ENCODE measurements at regions of chr18 and their contacts with region 1.

Region 1: GRCh38 chr18:63016270-63016669 is 300.9 kb downstream of the PHLPP1 start:
- DNase-seq: peak; percentile 42 to 51 (median 49)
- ATAC-seq: peak; percentile 74
- H3K4me3 ChIP-seq: no peak overlapping the region
- H3K27ac ChIP-seq: no peak overlapping the region
- H3K4me1 ChIP-seq: no peaks in the 10 kb centered on the region
- H3K27me3 ChIP-seq: peaks cover 0 to 4% of the 10 kb centered on the region in 2 experiments; a peak in 2 of 5 replicates
- CTCF ChIP-seq: peak; percentile 58 to 77 (median 63)
- EP300 ChIP-seq: no peak
- POLR2A ChIP-seq: no peak
- RAD21 ChIP-seq: peak; percentile 63 to 70

Region 2: GRCh38 chr18:62763101-62763521 is 253.2 kb before region 1 on chr18:
- CTCF ChIA-PET with region 1: no interaction called
- POLR2A ChIA-PET with region 1: no interaction called
- in situ Hi-C with region 1: no loop called
- intact Hi-C with region 1: no loop called
- DNase-seq: no peak
- ATAC-seq: no peak
- H3K4me3 ChIP-seq: no peak overlapping the region
- H3K27ac ChIP-seq: no peak overlapping the region
- H3K4me1 ChIP-seq: no peaks in the 10 kb centered on the region
- H3K27me3 ChIP-seq: no peaks in the 10 kb centered on the region
- CTCF ChIP-seq: no peak
- EP300 ChIP-seq: no peak
- POLR2A ChIP-seq: no peak
- RAD21 ChIP-seq: no peak

Region 3: GRCh38 chr18:63180971-63181376 is 164.7 kb after region 1 on chr18:
- CTCF ChIA-PET with region 1: no interaction called
- POLR2A ChIA-PET with region 1: no interaction called
- in situ Hi-C with region 1: loop called (anchors 10 kb)
- intact Hi-C with region 1: no loop called
- DNase-seq: no peak
- ATAC-seq: no peak
- H3K4me3 ChIP-seq: no peak overlapping the region
- H3K27ac ChIP-seq: no peak overlapping the region
- H3K4me1 ChIP-seq: no peaks in the 10 kb centered on the region; a peak in 1 of 5 replicates
- H3K27me3 ChIP-seq: peaks cover 0 to 17% of the 10 kb centered on the region in 2 experiments; a peak in 2 of 5 replicates
- CTCF ChIP-seq: no peak
- EP300 ChIP-seq: no peak
- POLR2A ChIP-seq: no peak
- RAD21 ChIP-seq: no peak

Region 4: GRCh38 chr18:63320046-63320689 is 303.9 kb after region 1 on chr18:
- CTCF ChIA-PET with region 1: interaction called, 6 read pairs
- POLR2A ChIA-PET with region 1: no interaction called
- in situ Hi-C with region 1: loop called (anchors 5 kb)
- intact Hi-C with region 1: loop called (anchors 1 kb)
- DNase-seq: peak; percentile 56 to 77 (median 72)
- ATAC-seq: peak; percentile 88
- H3K4me3 ChIP-seq: peak overlapping the region; percentile 46
- H3K27ac ChIP-seq: peak overlapping the region; percentile 60; the same call in 1 of the 3 replicates
- H3K4me1 ChIP-seq: peaks cover 7 to 17% of the 10 kb centered on the region in 2 experiments; a peak in 4 of 5 replicates
- H3K27me3 ChIP-seq: peaks cover 0 to 5% of the 10 kb centered on the region in 2 experiments; a peak in 2 of 5 replicates
- CTCF ChIP-seq: no peak
- EP300 ChIP-seq: no peak
- POLR2A ChIP-seq: no peak
- RAD21 ChIP-seq: no peak

Region 5: DNA sequence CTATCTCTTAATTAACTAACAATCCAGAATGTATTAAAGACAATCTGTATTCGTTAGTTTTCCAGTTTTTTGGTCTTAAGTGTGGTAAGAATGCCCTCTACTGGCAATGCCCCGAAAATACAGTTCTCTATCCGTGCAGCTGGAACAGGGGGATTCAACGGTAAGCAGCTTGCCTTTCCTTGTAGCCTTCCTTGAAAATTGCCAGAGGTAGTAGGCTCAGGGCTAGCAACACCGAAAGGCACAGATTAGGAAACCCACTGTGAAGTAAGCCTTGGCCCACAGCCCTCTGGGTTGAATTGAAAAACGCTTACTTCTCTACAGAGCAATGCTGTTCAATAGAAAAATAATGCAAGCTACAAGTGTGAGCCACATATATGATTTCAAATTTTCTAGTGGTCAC is 423.1 kb after region 1 on chr18:
- CTCF ChIA-PET with region 1: interaction called, 4 read pairs
- POLR2A ChIA-PET with region 1: interaction called, 3 read pairs
- in situ Hi-C with region 1: loop called (anchors 10 kb)
- intact Hi-C with region 1: loop called (anchors 1 kb)
- DNase-seq: peak; percentile 43 to 52 (median 46)
- ATAC-seq: peak; percentile 81
- H3K4me3 ChIP-seq: no peak overlapping the region
- H3K27ac ChIP-seq: no peak overlapping the region
- H3K4me1 ChIP-seq: no peaks in the 10 kb centered on the region
- H3K27me3 ChIP-seq: peaks cover 0 to 4% of the 10 kb centered on the region in 2 experiments; a peak in 1 of 5 replicates
- CTCF ChIP-seq: peak; percentile 50 to 77 (median 66)
- EP300 ChIP-seq: no peak
- POLR2A ChIP-seq: no peak
- RAD21 ChIP-seq: peak; percentile 44 to 72

Region 6: GRCh38 chr18:63848159-63848558 is 831.9 kb after region 1 on chr18:
- CTCF ChIA-PET with region 1: interaction called, 4 read pairs
- POLR2A ChIA-PET with region 1: no interaction called
- in situ Hi-C with region 1: loop called (anchors 25 kb)
- intact Hi-C with region 1: no loop called
- DNase-seq: peak in 3 of 4 experiments; percentile 5 to 23 (median 6)
- ATAC-seq: no peak
- H3K4me3 ChIP-seq: no peak overlapping the region
- H3K27ac ChIP-seq: no peak overlapping the region
- H3K4me1 ChIP-seq: no peaks in the 10 kb centered on the region
- H3K27me3 ChIP-seq: no peaks in the 10 kb centered on the region
- CTCF ChIP-seq: peak in 2 of 3 experiments; percentile 32 to 33; a peak in 1 of 6 replicates
- EP300 ChIP-seq: no peak
- POLR2A ChIP-seq: no peak
- RAD21 ChIP-seq: peak in 1 of 2 experiments; percentile 39; a peak in 3 of 4 replicates